K562 (cell line): ENCODE measurements at regions of chr5 and their contacts with region 1.

Region 1: DNA sequence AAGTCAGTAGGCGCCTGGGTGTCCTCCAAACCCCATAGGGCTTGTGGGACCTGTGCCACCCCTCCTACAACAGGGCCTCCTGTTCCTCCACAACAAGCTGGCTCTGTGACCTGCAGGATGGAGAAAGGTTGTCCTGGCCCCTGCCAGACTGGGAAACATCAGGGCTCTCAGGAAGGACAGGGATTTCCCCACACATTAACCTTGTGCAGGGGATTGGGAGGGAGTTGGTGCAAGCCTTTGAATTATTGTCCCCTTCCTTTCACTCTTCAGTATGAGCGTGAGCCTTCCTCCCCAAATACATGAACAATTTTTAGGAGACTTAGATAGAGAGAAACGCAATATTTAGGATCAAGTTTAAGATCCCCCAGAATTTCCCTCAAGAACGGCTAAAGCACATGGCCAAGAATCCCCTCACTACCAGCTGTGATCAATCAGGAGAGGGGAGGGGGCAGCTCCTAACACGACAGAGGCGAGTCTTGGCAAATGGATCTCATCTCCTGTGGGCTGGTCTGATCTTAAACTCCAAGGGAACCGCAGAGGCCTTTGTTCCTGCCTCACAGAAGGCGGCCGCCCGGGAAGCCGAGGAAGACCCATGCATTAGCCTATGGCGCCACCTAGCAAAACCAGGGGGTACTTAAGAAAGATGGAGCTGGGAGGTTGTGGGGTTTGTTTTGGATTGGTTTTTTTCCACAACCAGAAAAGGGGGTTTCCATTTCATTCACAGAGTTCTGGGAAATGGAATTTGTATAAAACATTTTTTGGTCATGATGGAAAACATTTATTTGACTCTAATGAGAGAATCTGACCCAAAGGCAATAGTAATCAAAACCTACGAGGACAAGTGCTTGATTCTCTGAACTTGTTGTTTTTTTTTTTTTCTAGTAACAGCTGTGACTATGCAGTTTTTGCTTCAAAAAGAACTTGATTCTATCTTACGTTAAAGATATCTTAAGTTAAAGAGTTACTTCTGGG is 36.1 kb upstream of the OSMR start:
- DNase-seq: peak; percentile 83 to 87 (median 86)
- ATAC-seq: peak; percentile 98
- H3K4me3 ChIP-seq: no peak overlapping the region
- H3K27ac ChIP-seq: no peak overlapping the region
- H3K4me1 ChIP-seq: peaks cover 2 to 7% of the 10 kb centered on the region in 2 experiments; a peak in 3 of 5 replicates
- H3K27me3 ChIP-seq: no peaks in the 10 kb centered on the region
- CTCF ChIP-seq: peak; percentile 94 to 98 (median 95)
- EP300 ChIP-seq: no peak
- POLR2A ChIP-seq: no peak
- RAD21 ChIP-seq: peak; percentile 97 to 98

Region 2: GRCh38 chr5:37889612-37890317 is 919.9 kb before region 1 on chr5:
- CTCF ChIA-PET with region 1: no interaction called
- POLR2A ChIA-PET with region 1: no interaction called
- in situ Hi-C with region 1: no loop called
- intact Hi-C with region 1: no loop called
- DNase-seq: no peak
- ATAC-seq: no peak
- H3K4me3 ChIP-seq: no peak overlapping the region
- H3K27ac ChIP-seq: no peak overlapping the region
- H3K4me1 ChIP-seq: no peaks in the 10 kb centered on the region
- H3K27me3 ChIP-seq: no peaks in the 10 kb centered on the region; a peak in 1 of 5 replicates
- CTCF ChIP-seq: no peak
- EP300 ChIP-seq: no peak
- POLR2A ChIP-seq: no peak
- RAD21 ChIP-seq: no peak

Region 3: GRCh38 chr5:38265546-38266179 is 544.0 kb before region 1 on chr5:
- CTCF ChIA-PET with region 1: interaction called, 5 read pairs
- POLR2A ChIA-PET with region 1: no interaction called
- in situ Hi-C with region 1: no loop called
- intact Hi-C with region 1: loop called (anchors 10 kb)
- DNase-seq: peak; percentile 69 to 80 (median 74)
- ATAC-seq: peak; percentile 99
- H3K4me3 ChIP-seq: no peak overlapping the region
- H3K27ac ChIP-seq: no peak overlapping the region
- H3K4me1 ChIP-seq: no peaks in the 10 kb centered on the region
- H3K27me3 ChIP-seq: peaks cover 11 to 20% of the 10 kb centered on the region in 2 experiments; a peak in 3 of 5 replicates
- CTCF ChIP-seq: peak; percentile 80 to 85 (median 82)
- EP300 ChIP-seq: no peak
- POLR2A ChIP-seq: no peak
- RAD21 ChIP-seq: peak; percentile 41 to 64

Region 4: GRCh38 chr5:38420691-38421390 is 388.8 kb before region 1 on chr5:
- CTCF ChIA-PET with region 1: interaction called, 4 read pairs
- POLR2A ChIA-PET with region 1: interaction called, 3 read pairs
- in situ Hi-C with region 1: no loop called
- intact Hi-C with region 1: loop called (anchors 5 kb)
- DNase-seq: peak; percentile 46 to 59 (median 57)
- ATAC-seq: peak; percentile 91
- H3K4me3 ChIP-seq: no peak overlapping the region
- H3K27ac ChIP-seq: no peak overlapping the region
- H3K4me1 ChIP-seq: no peaks in the 10 kb centered on the region
- H3K27me3 ChIP-seq: peaks cover 0 to 10% of the 10 kb centered on the region in 2 experiments; a peak in 1 of 5 replicates
- CTCF ChIP-seq: peak; percentile 64 to 82 (median 76)
- EP300 ChIP-seq: no peak
- POLR2A ChIP-seq: no peak
- RAD21 ChIP-seq: peak; percentile 69 to 77

Region 5: GRCh38 chr5:38441453-38442246 is 368.0 kb before region 1 on chr5:
- CTCF ChIA-PET with region 1: interaction called, 19 read pairs
- POLR2A ChIA-PET with region 1: interaction called, 8 read pairs
- in situ Hi-C with region 1: loop called (anchors 5 kb)
- intact Hi-C with region 1: loop called (anchors 1 kb)
- DNase-seq: peak; percentile 87 to 92 (median 88)
- ATAC-seq: peak; percentile 100
- H3K4me3 ChIP-seq: no peak overlapping the region
- H3K27ac ChIP-seq: no peak overlapping the region
- H3K4me1 ChIP-seq: peaks cover 0 to 6% of the 10 kb centered on the region in 2 experiments; a peak in 1 of 5 replicates
- H3K27me3 ChIP-seq: peaks cover 9 to 35% of the 10 kb centered on the region in 2 experiments; a peak in 4 of 5 replicates
- CTCF ChIP-seq: peak; percentile 96 to 98 (median 98)
- EP300 ChIP-seq: no peak
- POLR2A ChIP-seq: no peak
- RAD21 ChIP-seq: peak; percentile 98 to 99

Region 6: DNA sequence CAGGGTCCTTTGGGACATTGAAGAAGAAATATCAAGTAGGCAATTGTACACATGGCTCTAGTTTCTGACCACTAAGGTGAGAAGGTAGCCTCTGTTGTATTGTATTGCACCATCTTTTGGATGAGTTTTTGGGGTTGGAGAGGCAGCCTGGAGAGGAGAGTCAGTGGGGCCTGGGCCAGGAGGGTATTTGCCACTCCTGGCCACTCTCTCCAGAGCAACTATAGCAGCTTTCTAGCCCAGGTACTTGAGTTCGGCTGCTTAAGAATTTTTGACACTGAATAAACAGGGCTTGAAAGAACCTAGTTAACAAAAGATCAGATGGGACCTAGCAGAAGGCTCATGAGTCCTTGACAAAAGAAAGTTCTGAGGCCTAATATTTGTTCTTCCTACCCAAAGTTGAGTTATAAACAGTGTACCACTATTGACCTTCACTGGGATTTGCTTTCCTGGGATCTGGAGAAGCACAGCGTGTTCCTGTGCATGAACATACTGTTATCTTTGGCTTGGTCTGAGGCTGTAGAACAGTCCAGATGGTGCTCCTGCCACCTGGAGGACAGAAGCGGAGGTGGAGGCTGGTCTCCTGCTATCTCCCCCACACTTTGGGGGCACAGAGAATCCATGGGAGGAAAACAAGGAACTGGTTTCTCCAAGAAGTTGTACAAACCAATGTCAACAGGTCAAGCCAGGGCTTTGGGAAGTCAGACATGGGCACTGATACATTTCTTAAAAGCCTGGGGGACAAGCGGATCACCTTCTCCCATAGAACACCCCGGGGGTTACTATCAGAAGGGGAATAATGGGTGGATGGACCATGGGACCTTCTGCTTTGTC is 142.8 kb before region 1 on chr5:
- CTCF ChIA-PET with region 1: interaction called, 6 read pairs
- POLR2A ChIA-PET with region 1: interaction called, 4 read pairs
- in situ Hi-C with region 1: no loop called
- intact Hi-C with region 1: loop called (anchors 5 kb)
- DNase-seq: peak; percentile 57 to 64 (median 58)
- ATAC-seq: peak; percentile 97
- H3K4me3 ChIP-seq: no peak overlapping the region
- H3K27ac ChIP-seq: no peak overlapping the region
- H3K4me1 ChIP-seq: no peaks in the 10 kb centered on the region
- H3K27me3 ChIP-seq: 0 out of 5 replicates have a peak, but pooled peaks cover 0 to 6% of the 10 kb centered on the region in 2 experiments
- CTCF ChIP-seq: peak; percentile 79 to 82 (median 80)
- EP300 ChIP-seq: no peak
- POLR2A ChIP-seq: no peak
- RAD21 ChIP-seq: peak; percentile 86 to 89

Region 7: GRCh38 chr5:38827525-38827924 is 17.9 kb after region 1 on chr5:
- CTCF ChIA-PET with region 1: no interaction called
- POLR2A ChIA-PET with region 1: no interaction called
- in situ Hi-C with region 1: no loop called
- intact Hi-C with region 1: no loop called
- DNase-seq: no peak
- ATAC-seq: no peak
- H3K4me3 ChIP-seq: no peak overlapping the region
- H3K27ac ChIP-seq: no peak overlapping the region
- H3K4me1 ChIP-seq: no peaks in the 10 kb centered on the region; a peak in 1 of 5 replicates
- H3K27me3 ChIP-seq: no peaks in the 10 kb centered on the region
- CTCF ChIP-seq: no peak
- EP300 ChIP-seq: no peak
- POLR2A ChIP-seq: no peak
- RAD21 ChIP-seq: no peak